ENCODE measurements at regions of chr1 and their contacts with region 1.

Region 1: DNA sequence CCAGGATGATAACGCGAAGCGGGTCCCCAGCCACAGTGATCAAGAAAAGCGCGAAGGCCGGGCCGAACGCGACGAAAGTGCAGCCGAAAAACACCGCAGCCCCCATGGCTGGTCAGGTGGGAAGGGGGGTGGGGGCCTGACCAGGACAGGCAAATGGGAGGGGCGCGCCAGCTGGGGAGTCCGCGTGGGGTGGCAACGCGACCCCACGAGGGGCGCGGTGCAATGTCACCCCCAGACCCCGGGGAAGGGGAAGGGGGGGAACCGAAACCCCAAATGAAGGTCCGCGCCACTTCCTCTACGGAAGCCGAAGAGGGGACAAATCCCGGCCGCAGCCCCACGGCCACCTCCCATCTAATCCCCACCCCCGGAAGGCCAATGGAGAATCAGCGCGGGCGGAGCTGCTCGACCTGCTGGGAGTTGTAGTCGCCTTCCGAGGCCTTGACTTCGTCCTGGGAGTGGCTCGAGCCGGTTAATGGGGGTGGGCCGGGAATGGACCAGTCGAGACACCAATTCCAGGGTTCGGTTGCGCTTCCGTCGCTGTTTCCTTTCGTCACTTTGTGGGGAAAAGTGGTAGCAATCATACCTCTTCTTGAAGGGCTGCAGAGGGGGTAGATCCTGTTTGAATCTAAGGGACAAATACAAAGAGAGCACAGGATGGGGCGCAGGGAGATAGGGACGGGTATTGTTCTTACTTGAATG is at the start of gene APH1A:
- DNase-seq: peak; percentile 99
- total RNA-seq, gene APH1A: 57.3 TPM

Region 2: GRCh38 chr1:150235852-150236613 is 32.8 kb before region 1 on chr1 and contains the start of gene ANP32E:
- intact Hi-C with region 1: loop called (anchors 1 kb)
- DNase-seq: peak; percentile 97
- total RNA-seq, gene ANP32E: 55.3 TPM

Region 3: GRCh38 chr1:150281837-150282653 is 13.2 kb after region 1 on chr1 and contains the start of gene CIART:
- intact Hi-C with region 1: loop called (anchors 1 kb)
- DNase-seq: peak; percentile 95
- total RNA-seq, gene CIART: 10.0 TPM

Region 4: DNA sequence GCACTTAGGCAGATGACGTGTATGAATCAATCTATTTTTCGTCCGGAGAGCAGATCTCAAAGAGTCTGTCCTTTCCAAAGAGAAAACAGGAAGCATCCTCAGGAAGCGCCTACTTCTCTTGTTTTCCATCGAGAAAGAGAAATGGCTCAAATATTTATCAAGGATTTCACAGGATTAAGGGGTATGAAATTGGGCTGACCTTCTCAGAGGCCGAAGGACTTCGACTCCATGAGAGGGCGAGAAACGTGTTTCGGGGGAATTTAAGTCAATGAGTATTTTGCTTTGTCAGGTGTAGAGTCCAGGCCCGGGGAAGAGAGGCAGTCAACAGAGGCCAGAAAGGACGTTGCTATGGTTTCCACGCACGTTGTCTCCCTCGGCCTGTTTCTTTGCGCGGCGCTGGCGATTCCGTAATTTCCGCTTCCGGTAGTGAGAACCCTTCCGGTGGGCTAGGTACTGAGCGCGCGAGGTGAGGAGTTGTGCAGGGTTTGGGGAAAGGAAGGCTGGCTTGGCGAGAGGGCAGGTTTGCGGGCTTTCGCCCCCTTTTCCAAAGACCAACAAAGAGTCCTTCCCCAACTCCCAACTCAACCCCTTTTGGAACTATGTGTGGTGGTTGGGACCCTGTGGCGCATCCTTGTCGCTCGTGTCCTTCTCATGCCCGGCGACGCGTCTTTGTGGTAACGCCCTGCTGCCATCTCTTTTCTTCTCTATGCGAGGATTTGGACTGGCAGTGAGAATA is 24.7 kb after region 1 on chr1 and contains the start of gene MRPS21:
- intact Hi-C with region 1: loop called (anchors 1 kb)
- DNase-seq: peak; percentile 94
- total RNA-seq, gene MRPS21: 67.8 TPM

Region 5: DNA sequence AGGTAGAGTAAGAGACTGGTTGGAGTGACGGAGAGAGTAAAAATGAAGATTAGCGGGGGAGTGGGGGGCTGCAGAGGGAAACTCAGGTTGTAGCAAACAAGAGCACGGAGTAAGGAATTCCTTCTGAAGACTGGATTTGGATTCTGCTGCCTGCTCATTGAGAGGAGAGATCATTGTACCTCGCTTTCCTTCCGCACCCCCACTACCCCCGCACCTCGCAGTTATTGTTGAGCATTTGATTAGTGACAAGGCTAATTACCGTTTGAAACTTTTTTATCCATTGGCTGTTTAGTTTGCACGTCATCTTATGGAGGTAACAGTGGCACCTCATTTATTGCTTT is 52.9 kb after region 1 on chr1:
- intact Hi-C with region 1: loop called (anchors 2 kb)
- DNase-seq: no peak

Region 6: GRCh38 chr1:150363426-150364230 is 94.8 kb after region 1 on chr1 and contains the start of gene RPRD2:
- intact Hi-C with region 1: loop called (anchors 5 kb)
- DNase-seq: peak; percentile 99
- total RNA-seq, gene RPRD2: 23.5 TPM